CD4-positive, alpha-beta T cell (primary cell): ENCODE measurements at regions of chr11 and their contacts with region 1.

Region 1: GRCh38 chr11:128172046-128172878 is 415.1 kb downstream of the ETS1 start:
- DNase-seq: peak; percentile 73 to 92 (median 84)
- ATAC-seq: peak; percentile 83
- H3K4me3 ChIP-seq: no peak overlapping the region
- H3K4me3 Mint-ChIP-seq: no peak overlapping the region
- H3K27ac ChIP-seq: no peak overlapping the region
- H3K27ac Mint-ChIP-seq: no peak overlapping the region
- H3K4me1 ChIP-seq: no peaks in the 10 kb centered on the region
- H3K4me1 Mint-ChIP-seq: peaks cover 6% of the 10 kb centered on the region
- H3K27me3 ChIP-seq: no peaks in the 10 kb centered on the region
- H3K27me3 Mint-ChIP-seq: no peaks in the 10 kb centered on the region
- CTCF ChIP-seq: peak; percentile 91

Region 2: GRCh38 chr11:128157423-128158298 is 14.6 kb before region 1 on chr11:
- CTCF ChIA-PET with region 1: interaction called, 63 read pairs
- POLR2A ChIA-PET with region 1: no interaction called
- intact Hi-C with region 1: loop called in 1 of 2 experiments (anchors 1 kb)
- DNase-seq: peak in 13 of 14 experiments; percentile 9 to 84 (median 41)
- ATAC-seq: peak; percentile 94
- H3K4me3 ChIP-seq: peak overlapping the region; percentile 37
- H3K4me3 Mint-ChIP-seq: peak overlapping the region; percentile 87
- H3K27ac ChIP-seq: no peak overlapping the region
- H3K27ac Mint-ChIP-seq: peak overlapping the region; percentile 24
- H3K4me1 ChIP-seq: no peaks in the 10 kb centered on the region
- H3K4me1 Mint-ChIP-seq: peaks cover 8% of the 10 kb centered on the region
- H3K27me3 ChIP-seq: no peaks in the 10 kb centered on the region
- H3K27me3 Mint-ChIP-seq: no peaks in the 10 kb centered on the region
- CTCF ChIP-seq: peak; percentile 100

Region 3: GRCh38 chr11:128776424-128777284 is 604.4 kb after region 1 on chr11:
- CTCF ChIA-PET with region 1: interaction called, 12 read pairs
- POLR2A ChIA-PET with region 1: no interaction called
- intact Hi-C with region 1: loop called (anchors 2 to 5 kb)
- DNase-seq: peak in 11 of 14 experiments; percentile 12 to 80 (median 17)
- ATAC-seq: peak; percentile 64
- H3K4me3 ChIP-seq: no peak overlapping the region
- H3K4me3 Mint-ChIP-seq: peak overlapping the region; percentile 14
- H3K27ac ChIP-seq: no peak overlapping the region
- H3K27ac Mint-ChIP-seq: peak overlapping the region; percentile 50
- H3K4me1 ChIP-seq: peaks cover 51% of the 10 kb centered on the region
- H3K4me1 Mint-ChIP-seq: peaks cover 76% of the 10 kb centered on the region
- H3K27me3 ChIP-seq: no peaks in the 10 kb centered on the region
- H3K27me3 Mint-ChIP-seq: no peaks in the 10 kb centered on the region
- CTCF ChIP-seq: peak; percentile 57

Region 4: DNA sequence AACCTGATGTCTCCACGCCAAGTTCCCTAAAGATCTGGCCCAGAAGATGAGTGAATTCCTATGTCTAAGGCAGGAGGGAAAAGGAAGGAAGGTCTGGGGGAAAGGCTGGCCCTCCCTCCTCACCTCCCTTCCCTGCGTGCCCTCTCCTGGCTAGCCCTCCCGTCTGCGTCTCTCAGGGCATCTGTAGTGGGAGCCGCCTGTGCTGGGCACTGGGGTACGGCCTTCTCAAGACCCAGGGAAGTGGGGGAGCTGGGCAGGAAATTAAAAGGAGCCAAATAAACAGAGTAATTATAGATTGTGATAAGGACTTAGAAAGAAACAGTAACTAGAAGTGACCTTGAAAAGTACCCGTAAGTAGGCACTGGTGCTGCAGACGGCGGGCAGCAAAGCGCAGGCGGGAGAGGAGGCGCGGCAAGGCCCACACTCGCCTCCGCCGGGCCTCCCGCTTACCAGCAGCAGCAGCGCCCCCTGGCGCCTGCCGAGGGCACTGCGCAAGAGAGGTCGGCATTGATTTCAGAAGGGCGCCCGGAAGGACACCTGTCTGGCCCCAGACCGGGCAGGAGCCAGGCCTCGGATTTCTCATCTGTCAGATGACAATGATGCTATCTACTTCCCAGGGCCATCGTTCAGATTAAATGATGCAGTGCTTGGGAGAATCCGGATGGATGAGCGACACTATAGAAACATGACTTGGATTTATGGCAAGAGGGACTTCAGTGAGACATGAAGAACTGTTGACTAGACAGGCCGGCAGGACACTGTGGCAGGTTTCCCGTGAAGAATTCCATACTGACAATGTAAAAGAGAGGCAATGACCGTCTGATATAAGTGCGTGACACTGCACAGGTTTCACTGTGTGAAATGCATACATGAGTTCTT is 687.5 kb after region 1 on chr11:
- CTCF ChIA-PET with region 1: interaction called, 7 read pairs
- POLR2A ChIA-PET with region 1: no interaction called
- intact Hi-C with region 1: loop called (anchors 1 to 2 kb)
- DNase-seq: peak; percentile 57 to 86 (median 72)
- ATAC-seq: peak; percentile 98
- H3K4me3 ChIP-seq: no peak overlapping the region
- H3K4me3 Mint-ChIP-seq: no peak overlapping the region
- H3K27ac ChIP-seq: no peak overlapping the region
- H3K27ac Mint-ChIP-seq: no peak overlapping the region
- H3K4me1 ChIP-seq: peaks cover 9% of the 10 kb centered on the region
- H3K4me1 Mint-ChIP-seq: peaks cover 9% of the 10 kb centered on the region
- H3K27me3 ChIP-seq: no peaks in the 10 kb centered on the region
- H3K27me3 Mint-ChIP-seq: no peaks in the 10 kb centered on the region
- CTCF ChIP-seq: peak; percentile 97